ENCODE measurements at regions of chr2 and their contacts with region 1.

Region 1: GRCh38 chr2:157302492-157303099 is 23.0 kb downstream of the ERMN start:
- DNase-seq: peak; percentile 16
- H3K4me3 ChIP-seq: no peak overlapping the region
- H3K27ac ChIP-seq: no peak overlapping the region
- H3K27me3 ChIP-seq: no peaks in the 10 kb centered on the region
- CTCF ChIP-seq: peak; percentile 73

Region 2: GRCh38 chr2:155377266-155377680 is 1925.3 kb before region 1 on chr2:
- CTCF ChIA-PET with region 1: interaction called, 12 read pairs
- POLR2A ChIA-PET with region 1: no interaction called
- DNase-seq: no peak
- H3K4me3 ChIP-seq: no peak overlapping the region
- H3K27ac ChIP-seq: no peak overlapping the region
- H3K27me3 ChIP-seq: no peaks in the 10 kb centered on the region
- CTCF ChIP-seq: 0 out of 2 replicates have a peak, but pooled peaks have one; percentile 33

Region 3: GRCh38 chr2:156908825-156909224 is 393.8 kb before region 1 on chr2:
- CTCF ChIA-PET with region 1: no interaction called
- POLR2A ChIA-PET with region 1: no interaction called
- DNase-seq: peak; percentile 46
- H3K4me3 ChIP-seq: no peak overlapping the region
- H3K27ac ChIP-seq: no peak overlapping the region
- H3K27me3 ChIP-seq: no peaks in the 10 kb centered on the region
- CTCF ChIP-seq: no peak

Region 4: GRCh38 chr2:157261199-157261783 is 41.3 kb before region 1 on chr2:
- CTCF ChIA-PET with region 1: interaction called, 37 read pairs
- POLR2A ChIA-PET with region 1: interaction called, 3 read pairs
- DNase-seq: no peak
- H3K4me3 ChIP-seq: peak overlapping the region; percentile 50
- H3K27ac ChIP-seq: peak overlapping the region; percentile 55
- H3K27me3 ChIP-seq: no peaks in the 10 kb centered on the region
- CTCF ChIP-seq: no peak

Region 5: GRCh38 chr2:157283468-157283867 is 19.1 kb before region 1 on chr2:
- CTCF ChIA-PET with region 1: interaction called, 66 read pairs
- POLR2A ChIA-PET with region 1: no interaction called
- DNase-seq: no peak
- H3K4me3 ChIP-seq: no peak overlapping the region
- H3K27ac ChIP-seq: no peak overlapping the region
- H3K27me3 ChIP-seq: no peaks in the 10 kb centered on the region
- CTCF ChIP-seq: no peak

Region 6: GRCh38 chr2:157315901-157316300 is 13.3 kb after region 1 on chr2:
- CTCF ChIA-PET with region 1: interaction called, 25 read pairs
- POLR2A ChIA-PET with region 1: no interaction called
- DNase-seq: no peak
- H3K4me3 ChIP-seq: no peak overlapping the region
- H3K27ac ChIP-seq: no peak overlapping the region
- H3K27me3 ChIP-seq: no peaks in the 10 kb centered on the region
- CTCF ChIP-seq: no peak

Region 7: DNA sequence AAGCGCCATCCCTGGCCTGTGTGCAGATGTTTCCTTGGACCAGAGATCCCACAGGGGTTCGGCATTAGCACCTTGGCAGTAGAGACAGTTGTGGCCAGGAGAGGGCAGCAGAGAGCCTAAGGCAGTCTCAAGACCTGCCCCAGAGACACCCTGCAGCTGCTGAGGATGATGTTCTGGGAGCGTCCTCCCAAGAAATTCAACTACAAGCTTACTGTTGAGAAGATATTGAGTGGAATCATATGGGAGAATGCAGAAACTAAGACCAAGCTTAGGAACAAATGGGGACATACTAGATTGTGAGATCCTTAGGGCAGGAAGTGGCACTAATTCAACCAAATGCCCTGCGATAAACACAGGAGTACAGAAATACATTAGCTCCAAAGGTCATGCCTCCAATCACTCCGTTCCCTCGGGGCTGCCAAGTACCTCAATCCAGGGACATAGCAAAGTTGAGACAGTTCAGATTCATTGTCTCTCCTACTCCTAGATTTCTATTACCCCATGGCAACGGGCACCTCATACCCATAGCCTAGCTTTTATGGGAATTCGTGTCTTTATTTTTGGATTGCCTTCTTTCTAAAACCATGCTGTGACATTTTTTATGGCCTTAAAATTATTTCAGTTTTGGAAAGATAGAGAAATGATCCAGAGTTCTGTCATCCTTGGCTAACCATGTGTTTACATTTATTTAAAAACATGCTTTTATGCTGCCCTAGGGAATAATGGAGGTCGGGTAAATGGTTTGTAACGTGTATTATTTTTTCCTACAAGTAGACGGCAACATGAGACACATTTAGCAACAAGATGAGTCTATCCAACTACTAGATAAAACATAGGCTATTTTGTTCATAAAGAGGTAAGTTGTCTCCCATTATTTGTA is 25.3 kb after region 1 on chr2:
- CTCF ChIA-PET with region 1: interaction called, 299 read pairs
- POLR2A ChIA-PET with region 1: no interaction called
- DNase-seq: peak; percentile 53
- H3K4me3 ChIP-seq: no peak overlapping the region
- H3K27ac ChIP-seq: no peak overlapping the region
- H3K27me3 ChIP-seq: no peaks in the 10 kb centered on the region
- CTCF ChIP-seq: peak; percentile 97